ENCODE measurements at regions of chr6 and their contacts with region 1.

Region 1: DNA sequence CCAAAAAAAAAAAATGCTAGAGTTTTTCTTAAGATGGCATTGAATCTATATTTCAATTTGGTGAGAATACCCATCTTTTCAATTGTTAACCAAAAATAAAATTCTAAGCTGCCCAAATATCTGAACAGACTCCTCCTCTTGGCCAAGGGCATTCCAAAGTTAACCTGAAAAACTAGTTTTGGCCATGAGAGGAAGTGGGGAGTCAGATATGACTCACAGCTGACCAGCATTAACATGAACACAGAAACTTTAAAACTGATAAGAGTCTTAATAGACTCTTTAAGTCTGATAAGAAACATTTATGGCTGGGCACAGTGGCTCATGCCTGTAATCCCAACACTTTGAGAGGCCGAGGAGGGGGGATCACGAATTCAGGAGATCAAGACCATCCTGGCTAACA is 171.3 kb downstream of the FAXC start:
- DNase-seq: no peak
- H3K4me3 ChIP-seq: no peak overlapping the region
- H3K27ac ChIP-seq: no peak overlapping the region
- H3K4me1 ChIP-seq: no peaks in the 10 kb centered on the region
- H3K27me3 ChIP-seq: no peaks in the 10 kb centered on the region
- CTCF ChIP-seq: no peak
- POLR2A ChIP-seq: no peak

Region 2: DNA sequence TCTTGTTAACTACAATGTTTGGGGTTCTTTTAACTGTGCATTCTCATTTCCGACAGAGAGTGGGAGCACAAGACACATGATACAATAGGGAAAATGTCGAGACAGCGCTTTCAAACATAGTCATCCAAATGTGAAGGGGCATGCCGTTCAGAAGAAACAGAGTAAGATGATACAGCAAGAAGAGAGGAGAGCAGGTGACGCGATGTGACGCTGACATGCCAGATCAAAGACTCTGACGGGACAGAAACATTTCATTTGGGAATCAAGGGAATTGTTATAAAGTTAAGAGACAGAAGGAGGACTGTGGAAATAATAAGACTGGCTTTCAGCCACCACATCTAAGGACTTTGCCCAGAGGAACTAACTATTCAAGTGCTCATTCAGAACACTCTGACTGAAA is 53.9 kb after region 1 on chr6:
- intact Hi-C with region 1: loop called (anchors 2 kb)
- DNase-seq: no peak
- H3K4me3 ChIP-seq: no peak overlapping the region
- H3K27ac ChIP-seq: no peak overlapping the region
- H3K4me1 ChIP-seq: no peaks in the 10 kb centered on the region
- H3K27me3 ChIP-seq: peaks cover 0 to 20% of the 10 kb centered on the region in 2 donors
- CTCF ChIP-seq: no peak
- POLR2A ChIP-seq: no peak